ENCODE measurements at regions of chr14 and their contacts with region 1.

Region 1: GRCh38 chr14:91317381-91318308 is 73.1 kb upstream of the GPR68 start:
- DNase-seq: no peak
- CTCF ChIP-seq: peak; percentile 31

Region 2: GRCh38 chr14:91420686-91421085 is 103.0 kb after region 1 on chr14:
- in situ Hi-C with region 1: loop called (anchors 10 kb)
- DNase-seq: no peak
- CTCF ChIP-seq: no peak

Measured in GM13977 (cell line).